Heart left ventricle (tissue), 16 donors: ENCODE measurements at regions of chr6 and their contacts with region 1.

Region 1: DNA sequence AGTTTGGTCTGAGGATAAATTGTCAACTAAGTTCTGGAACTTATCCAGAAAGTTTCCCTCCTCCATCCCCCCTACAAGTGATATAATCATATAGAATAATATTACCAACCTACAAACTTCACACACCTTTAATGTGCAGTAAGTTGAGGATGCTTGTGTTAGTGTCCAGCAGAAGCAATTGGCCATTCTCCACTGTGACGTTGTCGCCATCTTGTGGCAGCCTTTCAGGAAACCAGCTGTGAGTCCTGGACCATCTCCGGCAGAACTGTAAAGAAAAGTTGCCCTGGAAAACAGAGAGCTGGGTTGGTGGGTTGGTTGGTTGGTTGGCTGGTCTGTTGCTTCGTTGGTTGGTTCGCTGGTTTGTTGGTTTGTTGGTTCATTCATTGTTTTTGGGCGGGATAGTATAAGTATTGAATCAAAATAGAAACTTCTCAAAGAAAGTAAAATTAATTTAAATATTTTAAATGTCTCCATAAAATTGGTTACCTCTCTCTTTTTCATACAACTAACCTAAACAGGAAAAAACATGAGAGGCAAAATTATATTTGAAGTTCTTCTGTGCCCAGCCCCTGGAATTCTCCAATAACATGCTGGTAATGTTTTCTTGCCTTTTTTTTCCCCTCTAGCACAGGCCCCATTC is 127.5 kb downstream of the PKHD1 start:
- DNase-seq: peak; percentile 30 to 56 (median 52)
- ATAC-seq: peak in 2 of 4 donors; percentile 45 to 65
- H3K4me3 ChIP-seq: no peak overlapping the region
- H3K27ac ChIP-seq: no peak overlapping the region
- H3K4me1 ChIP-seq: no peaks in the 10 kb centered on the region
- H3K27me3 ChIP-seq: peaks cover 0 to 18% (median 6%) of the 10 kb centered on the region in 9 donors
- CTCF ChIP-seq: peak; percentile 39 to 69 (median 52)
- POLR2A ChIP-seq: no peak

Region 2: DNA sequence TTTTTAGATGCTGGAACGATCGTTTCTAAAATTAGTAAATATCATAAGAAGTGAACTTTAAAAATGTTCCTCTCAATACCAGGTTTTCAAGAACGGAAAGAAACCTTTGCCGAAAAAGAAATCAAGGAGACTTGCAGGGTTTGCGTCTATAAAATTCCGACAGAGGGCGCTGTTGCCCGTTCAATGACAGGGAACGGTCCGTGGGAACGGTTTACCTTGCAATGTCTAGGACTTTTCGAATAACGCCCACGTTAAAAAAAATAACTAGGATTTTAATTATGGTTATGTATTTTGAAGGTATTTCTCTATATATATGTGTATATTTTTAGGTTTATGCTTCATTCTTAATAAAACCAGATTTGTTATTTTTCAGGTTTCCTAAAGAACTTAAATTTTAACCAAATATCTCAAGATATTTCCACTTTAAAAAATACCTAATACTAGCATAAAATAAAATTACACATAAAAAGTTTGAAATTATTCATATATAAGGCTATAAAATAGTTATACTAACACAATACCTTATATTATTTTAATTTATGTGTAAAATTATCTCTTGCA is 1143.7 kb before region 1 on chr6:
- intact Hi-C with region 1: loop called in 9 of 10 experiments (anchors 2 to 10 kb)
- DNase-seq: peak in 4 of 5 donors; percentile 33 to 62 (median 44)
- ATAC-seq: no peak
- H3K4me3 ChIP-seq: peak overlapping the region in 9 of 12 donors; percentile 2 to 51 (median 36)
- H3K27ac ChIP-seq: no peak overlapping the region
- H3K4me1 ChIP-seq: peaks cover 0 to 20% (median 1%) of the 10 kb centered on the region in 12 donors
- H3K27me3 ChIP-seq: peaks cover 11 to 85% (median 68%) of the 10 kb centered on the region in 9 donors
- CTCF ChIP-seq: peak; percentile 70 to 89 (median 79)
- POLR2A ChIP-seq: no peak

Region 3: DNA sequence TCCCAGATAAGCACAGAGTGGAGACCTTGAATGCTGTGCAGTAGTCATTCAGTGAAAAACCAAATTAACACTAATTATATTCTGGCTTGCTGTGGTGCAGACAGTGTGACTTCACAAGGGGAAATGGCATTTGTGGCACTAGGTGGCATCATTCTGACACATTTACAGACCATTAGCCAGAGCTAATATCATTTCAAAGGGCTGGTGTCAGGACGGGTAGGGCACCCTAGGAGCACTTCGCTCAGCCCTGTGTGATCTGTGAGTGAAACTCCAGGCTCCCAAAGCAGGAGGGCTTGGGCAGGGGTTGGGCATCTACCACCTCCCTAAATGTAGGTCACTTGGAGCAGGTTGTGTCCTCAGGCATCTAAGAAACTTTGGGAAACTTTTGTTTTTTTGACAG is 428.2 kb before region 1 on chr6:
- intact Hi-C with region 1: loop called in 2 of 10 experiments (anchors 5 to 10 kb)
- DNase-seq: no peak
- ATAC-seq: peak in 3 of 4 donors; percentile 67 to 76 (median 67)
- H3K4me3 ChIP-seq: no peak overlapping the region
- H3K27ac ChIP-seq: no peak overlapping the region
- H3K4me1 ChIP-seq: no peaks in the 10 kb centered on the region
- H3K27me3 ChIP-seq: no peaks in the 10 kb centered on the region
- CTCF ChIP-seq: peak in 7 of 12 donors; percentile 10 to 42 (median 30)
- POLR2A ChIP-seq: no peak